WTC11 (cell line): ENCODE measurements at regions of chr10 and their contacts with region 1.

Region 1: DNA sequence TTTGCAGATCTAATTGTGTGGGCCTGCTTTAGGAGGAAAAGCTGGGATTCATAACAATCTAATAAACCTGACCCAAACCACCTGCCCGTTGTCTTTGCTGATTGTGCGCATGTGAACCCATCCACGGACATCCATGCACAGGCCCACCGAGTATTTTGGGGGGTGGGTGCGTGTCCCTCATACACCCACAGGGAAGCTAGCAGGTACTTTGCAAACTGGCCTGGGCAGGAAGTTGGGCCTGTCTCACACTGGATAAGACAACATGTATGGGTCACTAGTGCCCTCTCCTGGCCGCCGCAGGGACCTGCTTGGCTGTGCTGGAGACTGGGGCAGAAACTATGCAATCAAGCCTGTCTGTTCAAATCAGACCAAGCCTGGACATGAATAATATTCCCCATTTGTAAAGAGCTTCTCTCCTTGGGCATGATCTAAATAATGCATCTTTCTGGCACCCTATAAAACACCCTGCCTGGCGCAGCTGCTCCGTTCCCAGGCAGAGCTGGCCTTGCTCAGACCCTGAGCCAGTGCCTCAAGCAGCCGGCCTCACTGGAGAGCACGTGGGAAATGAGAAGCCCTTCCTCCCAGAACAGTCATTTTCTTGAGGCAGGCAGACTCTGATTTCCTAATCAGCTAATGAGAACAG is 15.8 kb downstream of the ECHDC3 start:
- DNase-seq: peak; percentile 91
- ATAC-seq: peak; percentile 98
- H3K4me3 Mint-ChIP-seq: no peak overlapping the region
- H3K27ac Mint-ChIP-seq: peak overlapping the region; percentile 60; the same call in 1 of the 2 replicates
- H3K4me1 Mint-ChIP-seq: 0 out of 2 replicates have a peak, but pooled peaks cover 4% of the 10 kb centered on the region
- H3K27me3 Mint-ChIP-seq: no peaks in the 10 kb centered on the region
- CTCF ChIP-seq: peak; percentile 79

Region 2: GRCh38 chr10:11515596-11516430 is 242.1 kb before region 1 on chr10:
- CTCF ChIA-PET with region 1: interaction called, 28 read pairs
- POLR2A ChIA-PET with region 1: no interaction called
- DNase-seq: peak; percentile 41
- ATAC-seq: peak; percentile 60
- H3K4me3 Mint-ChIP-seq: no peak overlapping the region
- H3K27ac Mint-ChIP-seq: no peak overlapping the region
- H3K4me1 Mint-ChIP-seq: peaks cover 9% of the 10 kb centered on the region
- H3K27me3 Mint-ChIP-seq: no peaks in the 10 kb centered on the region
- CTCF ChIP-seq: peak; percentile 46; the same call in 1 of the 2 replicates